ENCODE measurements at regions of chr15 and their contacts with region 1.

Region 1: DNA sequence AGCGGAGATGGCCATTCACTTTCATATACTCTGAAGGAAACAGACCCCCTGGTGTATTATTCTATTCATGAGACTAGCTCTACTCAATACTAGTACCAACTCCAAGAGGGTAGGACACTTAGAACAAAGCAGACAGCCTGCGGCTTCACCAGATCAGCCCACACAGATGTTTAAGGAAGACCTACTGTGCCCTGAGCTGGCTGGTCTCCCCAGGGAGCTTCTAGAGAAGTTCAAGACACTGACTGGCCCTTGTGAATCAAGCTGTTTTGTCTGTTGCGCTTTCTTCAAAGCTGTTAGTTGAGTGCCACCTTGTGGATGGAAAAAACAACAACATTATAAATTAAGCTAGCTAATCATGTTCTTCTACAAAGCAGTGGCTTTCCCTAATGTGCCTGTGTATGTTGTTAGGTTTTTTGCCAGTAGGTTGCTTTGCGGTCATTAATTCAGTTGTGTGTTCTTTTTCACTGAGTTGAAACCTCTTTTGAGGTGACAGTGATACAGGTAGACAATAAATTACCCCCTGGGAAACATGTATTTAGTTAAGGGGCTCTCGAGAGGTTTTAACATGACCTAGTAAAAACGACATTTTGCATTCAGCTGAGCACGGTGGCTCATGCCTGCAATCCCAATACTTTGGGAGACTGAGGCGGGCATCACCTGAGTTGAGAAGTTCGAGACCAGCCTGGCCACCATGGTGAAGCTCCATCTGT is 64.2 kb upstream of the MYZAP start:
- DNase-seq: no peak

Region 2: GRCh38 chr15:55846116-55846707 is 1681.3 kb before region 1 on chr15:
- intact Hi-C with region 1: no loop called
- DNase-seq: no peak

Region 3: DNA sequence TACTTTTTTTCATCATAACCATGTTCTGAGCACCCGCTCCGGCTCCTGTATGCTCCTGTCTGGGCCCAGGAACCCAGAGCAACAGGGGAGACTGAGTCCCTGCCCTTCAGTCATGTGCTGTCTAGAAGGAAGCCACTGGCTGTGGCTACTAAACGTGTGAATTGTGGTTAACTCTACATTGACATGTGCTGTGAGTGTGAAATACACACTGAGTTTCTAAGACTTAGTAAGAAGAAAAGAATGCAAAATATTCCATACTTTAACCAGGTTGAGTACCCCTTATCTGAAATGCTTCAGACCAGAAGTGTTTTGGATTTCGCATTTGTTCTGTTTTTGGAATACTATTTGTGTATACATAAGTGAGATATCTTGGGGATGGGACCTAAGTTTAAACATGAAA is 194.1 kb before region 1 on chr15:
- intact Hi-C with region 1: loop called in 1 of 2 experiments (anchors 2 kb)
- DNase-seq: no peak

Region 4: DNA sequence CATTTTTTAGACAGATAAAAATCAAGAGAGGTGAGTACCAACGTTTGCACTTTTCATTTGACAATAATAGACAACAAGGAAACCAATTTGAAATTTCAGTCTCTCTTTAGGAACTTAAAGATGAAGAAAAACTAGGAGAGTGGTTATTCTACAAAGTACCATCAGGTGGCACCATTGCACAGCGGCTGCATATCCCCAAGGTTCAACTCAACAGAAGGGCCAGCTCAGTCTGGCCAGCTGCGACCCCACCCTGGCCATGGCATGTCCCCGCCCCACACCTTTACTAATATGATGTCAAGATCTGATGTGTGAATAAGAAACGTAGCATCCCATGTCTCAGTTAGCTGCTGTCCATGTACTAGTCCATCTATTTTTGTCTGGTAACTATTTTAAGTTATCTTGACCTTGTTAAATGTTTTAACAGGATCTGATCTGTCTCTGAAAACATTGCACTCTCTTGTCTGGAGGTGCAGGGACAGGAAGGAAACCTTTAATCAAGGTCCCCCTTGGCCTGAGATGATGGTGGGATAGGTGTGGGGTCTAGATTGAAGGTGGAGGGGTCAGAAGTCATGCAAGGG is 186.8 kb before region 1 on chr15:
- intact Hi-C with region 1: loop called in 1 of 2 experiments (anchors 2 kb)
- DNase-seq: no peak

Measured in posterior vena cava (tissue), 2 donors.